Right cardiac atrium (tissue), 5 donors: ENCODE measurements at regions of chr15 and their contacts with region 1.

Region 1: GRCh38 chr15:45030743-45031142 is 7.7 kb downstream of the SORD start:
- DNase-seq: no peak
- ATAC-seq: no peak
- H3K4me3 ChIP-seq: no peak overlapping the region
- H3K27ac ChIP-seq: no peak overlapping the region
- H3K4me1 ChIP-seq: no peaks in the 10 kb centered on the region
- H3K27me3 ChIP-seq: no peaks in the 10 kb centered on the region

Region 2: DNA sequence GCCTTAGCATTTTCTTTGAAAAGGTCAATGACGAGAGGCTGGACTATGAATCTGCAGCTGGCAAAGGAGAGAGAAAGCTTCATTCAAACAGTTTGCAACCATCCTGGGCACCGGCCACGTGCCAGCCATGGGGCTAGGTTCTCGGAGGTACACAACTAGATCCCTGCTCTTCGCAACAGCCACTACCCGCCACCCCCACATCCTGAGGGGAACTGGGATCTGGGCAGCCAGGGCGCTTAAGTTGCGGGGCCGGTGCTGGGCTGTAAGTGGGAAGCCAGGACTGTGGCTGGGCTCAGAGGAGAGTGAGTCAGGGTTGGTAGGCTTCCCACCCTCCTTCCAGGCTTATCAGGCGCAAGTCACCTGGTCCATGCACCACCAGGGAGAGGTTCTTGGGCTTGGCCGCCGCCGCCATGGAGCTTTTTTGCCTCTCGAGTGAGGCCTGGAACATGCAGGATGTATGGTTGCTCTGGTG is 169.3 kb before region 1 on chr15:
- intact Hi-C with region 1: loop called in 1 of 4 experiments (anchors 10 kb)
- DNase-seq: peak in 2 of 3 donors; percentile 43 to 52
- ATAC-seq: no peak
- H3K4me3 ChIP-seq: no peak overlapping the region
- H3K27ac ChIP-seq: no peak overlapping the region
- H3K4me1 ChIP-seq: no peaks in the 10 kb centered on the region
- H3K27me3 ChIP-seq: no peaks in the 10 kb centered on the region

Region 3: DNA sequence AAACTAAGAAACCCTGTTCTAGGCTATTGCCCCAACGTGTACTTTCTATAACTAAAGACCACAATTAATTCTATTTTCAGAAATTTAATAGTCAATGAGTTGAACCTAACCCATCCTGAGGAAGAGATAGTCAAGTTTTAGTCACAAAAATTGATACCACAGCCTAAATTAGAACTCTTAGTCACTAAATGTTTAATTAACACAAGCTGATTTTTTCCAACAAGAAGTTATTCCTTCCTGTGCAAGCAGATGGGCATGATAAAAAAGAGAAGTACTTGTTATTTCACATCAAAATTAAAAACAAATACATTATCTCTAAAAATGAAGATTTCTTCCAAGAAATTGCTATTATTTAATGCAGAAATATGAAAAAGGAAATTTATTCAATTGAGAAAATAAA is 112.6 kb before region 1 on chr15:
- intact Hi-C with region 1: no loop called
- DNase-seq: no peak
- ATAC-seq: no peak
- H3K4me3 ChIP-seq: no peak overlapping the region
- H3K27ac ChIP-seq: no peak overlapping the region
- H3K4me1 ChIP-seq: no peaks in the 10 kb centered on the region
- H3K27me3 ChIP-seq: no peaks in the 10 kb centered on the region

Region 4: GRCh38 chr15:45118131-45118588 is 87.4 kb after region 1 on chr15:
- intact Hi-C with region 1: loop called in 1 of 4 experiments (anchors 10 kb)
- DNase-seq: peak; percentile 87 to 94 (median 90)
- ATAC-seq: peak; percentile 94 to 96
- H3K4me3 ChIP-seq: no peak overlapping the region
- H3K27ac ChIP-seq: no peak overlapping the region
- H3K4me1 ChIP-seq: no peaks in the 10 kb centered on the region
- H3K27me3 ChIP-seq: no peaks in the 10 kb centered on the region